ENCODE measurements at regions of chr1 and their contacts with region 1.

Region 1: GRCh38 chr1:89198491-89199072 is at the start of gene GBP4:
- DNase-seq: peak; percentile 59
- H3K4me3 Mint-ChIP-seq: peak within 1 kb of the TSS; percentile 91
- H3K27ac Mint-ChIP-seq: peak within 1 kb of the TSS; percentile 89
- H3K4me1 Mint-ChIP-seq: peaks cover 63% of the 10 kb centered on the region
- H3K27me3 Mint-ChIP-seq: no peaks in the 10 kb centered on the region
- total RNA-seq, gene GBP4: 61.6 to 70.6 TPM

Region 2: GRCh38 chr1:89022167-89022959 is 176.2 kb before region 1 on chr1 and contains the start of gene GBP3:
- CTCF ChIA-PET with region 1: no interaction called
- POLR2A ChIA-PET with region 1: interaction called, 15 read pairs
- DNase-seq: no peak
- H3K4me3 Mint-ChIP-seq: peak within 1 kb of the TSS; percentile 87
- H3K27ac Mint-ChIP-seq: peak within 1 kb of the TSS; percentile 84
- H3K4me1 Mint-ChIP-seq: peaks cover 40% of the 10 kb centered on the region
- H3K27me3 Mint-ChIP-seq: no peaks in the 10 kb centered on the region
- total RNA-seq, gene GBP3: 33.6 to 34.4 TPM

Region 3: DNA sequence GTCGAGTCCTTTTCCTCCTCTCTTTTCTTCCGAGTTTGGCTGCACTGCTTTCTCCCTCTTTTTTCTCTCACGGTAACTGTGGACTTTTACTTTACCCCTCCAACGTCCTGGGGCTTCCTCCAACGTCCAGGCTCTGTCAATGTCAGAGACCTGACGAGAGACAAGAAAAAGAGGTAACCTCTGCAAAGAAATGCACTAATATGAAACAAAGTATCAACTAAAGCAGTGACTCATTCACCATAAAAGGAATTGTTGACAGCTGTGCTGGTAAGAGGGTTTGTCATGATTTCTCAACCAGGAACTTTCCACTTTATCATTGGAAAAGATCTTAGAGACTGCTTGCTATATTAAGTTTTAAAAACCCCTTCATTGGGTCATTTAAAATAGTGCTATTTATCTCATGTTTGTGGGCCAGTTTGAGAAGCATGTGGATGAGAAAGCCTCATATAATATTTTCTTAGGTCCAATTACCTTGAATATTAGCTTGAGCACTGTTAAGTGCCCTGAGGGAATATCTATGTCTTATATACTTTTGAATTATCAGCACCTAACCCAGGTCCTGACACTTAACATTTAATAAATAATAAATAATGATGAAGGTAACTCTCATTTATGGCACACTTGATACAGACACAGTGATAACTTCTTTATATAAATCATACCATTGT is 72.5 kb before region 1 on chr1 and contains the start of gene GBP2:
- CTCF ChIA-PET with region 1: interaction called, 6 read pairs
- POLR2A ChIA-PET with region 1: interaction called, 99 read pairs
- DNase-seq: peak; percentile 32
- H3K4me3 Mint-ChIP-seq: peak within 1 kb of the TSS; percentile 99
- H3K27ac Mint-ChIP-seq: peak within 1 kb of the TSS; percentile 97
- H3K4me1 Mint-ChIP-seq: peaks cover 55% of the 10 kb centered on the region
- H3K27me3 Mint-ChIP-seq: no peaks in the 10 kb centered on the region
- total RNA-seq, gene GBP2: 280 to 281 TPM

Region 4: DNA sequence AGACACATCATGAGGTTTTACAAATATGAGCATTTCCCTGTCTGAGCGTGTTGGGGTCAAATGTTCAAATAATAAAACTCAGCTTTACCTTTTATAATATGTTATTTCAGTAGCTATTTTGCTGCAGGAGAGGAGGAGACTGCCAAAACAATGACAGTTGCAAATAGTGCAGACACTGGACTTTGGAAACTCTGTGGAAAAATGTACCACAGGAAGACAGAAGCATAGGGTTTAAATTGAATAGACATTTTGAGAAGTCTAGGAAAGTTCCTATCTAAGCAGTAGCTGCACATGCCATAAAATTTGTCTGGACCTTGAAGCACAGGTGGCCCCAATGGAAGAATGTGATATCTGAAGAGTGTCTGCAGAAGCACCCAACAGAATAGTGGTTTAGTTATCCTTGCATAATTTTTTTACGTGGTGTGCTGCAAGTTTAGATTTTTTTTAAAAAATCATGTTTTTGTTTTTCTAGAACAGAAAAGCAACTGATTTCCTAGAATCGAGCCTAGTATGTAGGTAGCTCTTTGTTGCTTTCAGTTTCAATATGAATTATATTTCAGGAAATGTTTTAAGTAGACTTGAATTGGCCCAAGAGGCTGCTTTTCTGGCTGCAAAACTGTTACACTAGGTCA is 88.1 kb after region 1 on chr1:
- CTCF ChIA-PET with region 1: no interaction called
- POLR2A ChIA-PET with region 1: interaction called, 23 read pairs
- DNase-seq: peak; percentile 28
- H3K4me3 Mint-ChIP-seq: peak overlapping the region; percentile 43
- H3K27ac Mint-ChIP-seq: peak overlapping the region; percentile 94
- H3K4me1 Mint-ChIP-seq: peaks cover 69% of the 10 kb centered on the region
- H3K27me3 Mint-ChIP-seq: no peaks in the 10 kb centered on the region

Region 5: DNA sequence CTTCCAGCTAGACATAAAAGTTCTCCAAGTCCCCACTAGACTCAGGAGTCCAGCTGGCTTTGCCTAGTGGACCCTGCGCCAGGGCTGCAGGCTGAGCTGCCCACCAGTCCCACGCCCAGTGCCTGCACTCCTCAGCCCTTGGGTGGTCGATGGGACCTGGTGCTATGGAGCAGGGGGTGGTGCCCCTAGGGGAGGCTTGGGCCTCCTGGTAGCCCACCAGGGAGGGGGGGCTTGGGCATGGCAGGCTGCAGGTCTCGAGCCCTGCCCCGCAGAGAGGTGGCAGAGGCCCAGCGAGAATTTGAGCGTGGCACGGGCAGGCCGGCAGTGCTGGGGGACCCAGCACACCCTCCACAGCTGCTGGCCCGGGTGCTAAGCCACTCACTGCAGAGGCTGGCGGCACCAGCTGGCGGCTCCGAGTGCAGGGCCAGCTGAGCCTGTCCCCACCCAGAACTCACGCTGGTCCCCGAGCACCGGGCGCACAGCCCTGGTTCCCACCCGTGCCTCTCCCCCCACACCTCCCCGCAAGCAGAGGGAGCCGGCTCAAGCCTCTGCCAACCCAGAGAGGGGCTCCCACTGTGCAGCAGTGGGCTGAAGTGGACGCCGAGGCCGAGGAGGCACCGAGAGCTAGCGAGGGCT is 104.2 kb after region 1 on chr1:
- CTCF ChIA-PET with region 1: no interaction called
- POLR2A ChIA-PET with region 1: no interaction called
- DNase-seq: no peak
- H3K4me3 Mint-ChIP-seq: no peak overlapping the region
- H3K27ac Mint-ChIP-seq: no peak overlapping the region
- H3K4me1 Mint-ChIP-seq: peaks cover 28% of the 10 kb centered on the region
- H3K27me3 Mint-ChIP-seq: no peaks in the 10 kb centered on the region

Region 6: GRCh38 chr1:89358287-89358893 is 159.8 kb after region 1 on chr1:
- CTCF ChIA-PET with region 1: interaction called, 19 read pairs
- POLR2A ChIA-PET with region 1: interaction called, 20 read pairs
- DNase-seq: peak; percentile 86
- H3K4me3 Mint-ChIP-seq: peak overlapping the region; percentile 29
- H3K27ac Mint-ChIP-seq: no peak overlapping the region
- H3K4me1 Mint-ChIP-seq: peaks cover 47% of the 10 kb centered on the region
- H3K27me3 Mint-ChIP-seq: no peaks in the 10 kb centered on the region

Measured in activated CD4-positive, alpha-beta memory T cell treated with anti-CD3 and anti-CD28 coated beads, Interleukin-2, amount 10 ng/mL, durations not matched to agents 7 days and 5 days (primary cell).